Thyroid gland (tissue), 4 donors: ENCODE measurements at regions of chr11 and their contacts with region 1.

Region 1: DNA sequence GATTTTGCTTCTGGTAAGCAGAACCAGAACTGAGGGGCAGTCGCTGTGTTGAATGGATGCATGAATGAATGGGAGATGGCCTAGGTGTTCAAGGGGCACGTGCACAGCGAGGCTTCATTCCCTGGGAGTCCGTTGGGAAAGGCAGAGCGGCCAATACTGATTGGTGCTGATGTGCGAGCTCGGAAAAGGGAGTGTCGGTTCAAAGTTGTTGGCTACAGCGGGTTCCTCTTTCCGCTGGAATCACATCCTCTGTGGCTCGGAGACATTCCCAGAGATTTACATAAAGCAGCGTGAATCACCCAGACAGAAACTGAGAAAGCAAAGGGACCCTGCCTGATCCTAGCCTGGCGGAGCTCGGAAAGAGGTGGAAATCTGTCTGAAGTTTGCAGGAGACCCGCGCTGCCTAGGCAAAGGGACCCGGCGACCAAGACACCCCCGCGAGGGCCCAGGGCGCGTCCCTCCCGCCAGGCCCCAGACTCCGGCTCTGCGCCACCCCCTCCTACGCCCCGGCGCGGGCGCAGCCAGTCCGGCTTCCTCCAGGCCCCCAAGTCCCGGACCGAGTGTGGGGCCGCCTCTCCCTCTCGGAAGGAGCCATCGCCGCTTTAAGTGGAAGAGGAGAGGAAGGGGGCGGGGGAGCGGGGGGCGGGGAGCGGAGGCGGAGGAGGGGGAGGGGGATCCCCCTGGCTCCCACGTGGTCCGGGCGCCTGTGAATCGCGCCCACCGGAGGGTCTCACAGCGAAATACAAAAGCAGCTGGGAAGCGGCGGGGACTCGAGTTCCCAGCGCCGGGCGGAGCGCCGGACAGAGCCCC is at the start of gene FJX1:
- DNase-seq: peak; percentile 13 to 22
- H3K4me3 ChIP-seq: peak within 1 kb of the TSS in 1 of 3 donors; percentile 49
- H3K27ac ChIP-seq: peak within 1 kb of the TSS in 2 of 3 donors; percentile 64 to 71
- H3K4me1 ChIP-seq: peaks cover 15 to 24% of the 10 kb centered on the region in 2 donors
- H3K27me3 ChIP-seq: peaks cover 8% of the 10 kb centered on the region
- CTCF ChIP-seq: no peak
- POLR2A ChIP-seq: no peak
- total RNA-seq, gene FJX1: 1.5 to 5.9 (median 2.9) TPM

Region 2: GRCh38 chr11:35822815-35823495 is 205.1 kb after region 1 on chr11:
- intact Hi-C with region 1: loop called (anchors 10 kb)
- DNase-seq: no peak
- H3K4me3 ChIP-seq: no peak overlapping the region
- H3K27ac ChIP-seq: no peak overlapping the region
- H3K4me1 ChIP-seq: peaks cover 0 to 5% of the 10 kb centered on the region in 2 donors
- H3K27me3 ChIP-seq: no peaks in the 10 kb centered on the region
- CTCF ChIP-seq: no peak
- POLR2A ChIP-seq: no peak

Region 3: GRCh38 chr11:36265793-36266628 is 648.1 kb after region 1 on chr11:
- intact Hi-C with region 1: loop called (anchors 5 kb)
- DNase-seq: peak; percentile 51 to 61
- H3K4me3 ChIP-seq: no peak overlapping the region
- H3K27ac ChIP-seq: no peak overlapping the region
- H3K4me1 ChIP-seq: no peaks in the 10 kb centered on the region
- H3K27me3 ChIP-seq: no peaks in the 10 kb centered on the region
- CTCF ChIP-seq: peak; percentile 32 to 82 (median 60)
- POLR2A ChIP-seq: no peak